ENCODE measurements at regions of chr18 and their contacts with region 1.

Region 1: DNA sequence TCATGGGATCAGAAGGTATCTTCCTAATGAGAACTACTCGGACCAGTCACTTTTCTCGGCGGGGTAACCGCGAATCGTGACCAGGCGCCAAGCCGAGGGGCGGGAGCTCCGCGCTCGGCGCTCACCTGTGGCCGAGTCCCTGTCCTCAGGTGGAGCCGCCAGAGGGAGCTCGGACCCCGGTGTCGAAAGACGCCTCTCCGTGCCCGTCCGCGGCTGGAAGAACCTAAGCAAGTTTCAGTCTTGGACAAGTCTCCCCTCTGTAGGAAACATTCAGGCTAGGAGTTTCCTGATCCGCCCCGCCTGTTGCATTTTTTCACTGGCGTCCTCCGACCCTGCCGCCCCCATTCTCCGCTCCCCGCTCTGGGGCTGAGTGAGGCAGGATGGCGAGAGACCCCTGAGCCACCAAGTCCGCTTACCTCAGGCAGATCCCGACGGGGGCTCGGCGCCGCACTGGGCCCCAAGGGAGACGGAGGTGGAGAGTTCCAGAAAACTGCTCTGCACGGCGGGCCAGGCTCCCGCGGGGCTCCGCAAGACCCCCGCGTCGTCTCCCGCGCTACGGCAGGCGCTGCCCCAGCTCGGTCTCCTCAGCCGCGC is 478 bp downstream of the DSEL start:
- DNase-seq: peak; percentile 15 to 76 (median 45)
- ATAC-seq: peak; percentile 5
- H3K4me3 ChIP-seq: peak overlapping the region; percentile 77
- H3K4me3 Mint-ChIP-seq: peak overlapping the region; percentile 89
- H3K27ac ChIP-seq: no peak overlapping the region
- H3K27ac Mint-ChIP-seq: peak overlapping the region; percentile 18
- H3K4me1 ChIP-seq: peaks cover 18% of the 10 kb centered on the region
- H3K4me1 Mint-ChIP-seq: peaks cover 37% of the 10 kb centered on the region
- H3K27me3 ChIP-seq: no peaks in the 10 kb centered on the region
- H3K27me3 Mint-ChIP-seq: no peaks in the 10 kb centered on the region
- CTCF ChIP-seq: peak; percentile 39

Region 2: DNA sequence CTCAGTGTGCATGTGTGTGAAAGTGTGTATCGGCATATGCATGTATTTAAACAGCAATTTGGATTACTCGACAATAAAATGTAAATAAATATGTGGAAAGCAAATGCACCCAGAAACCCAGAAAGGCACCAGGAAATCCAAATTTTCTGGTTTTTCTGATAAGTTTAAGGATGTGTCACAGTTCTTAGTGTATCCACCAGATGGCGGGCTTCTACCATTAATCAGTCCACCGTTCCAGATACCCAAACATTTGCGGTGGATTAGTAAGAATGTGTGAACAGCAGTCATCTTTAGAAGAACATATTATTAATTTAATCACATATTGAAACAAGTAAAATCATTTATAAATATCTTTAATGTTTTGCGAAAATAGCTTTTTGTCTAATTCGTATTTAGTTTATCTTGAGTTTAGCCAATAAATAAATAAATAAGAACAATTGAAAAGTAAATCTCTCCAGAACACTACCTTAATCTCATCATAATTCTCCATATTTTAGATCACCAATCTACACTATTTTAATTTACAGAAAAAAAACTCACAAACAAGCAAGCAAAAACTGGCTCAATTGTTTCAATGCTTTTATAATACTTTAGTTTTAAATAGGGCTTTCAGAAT is 298.4 kb before region 1 on chr18:
- CTCF ChIA-PET with region 1: no interaction called
- POLR2A ChIA-PET with region 1: no interaction called
- intact Hi-C with region 1: loop called in 1 of 2 experiments (anchors 5 kb)
- DNase-seq: peak in 13 of 14 experiments; percentile 16 to 76 (median 37)
- ATAC-seq: peak; percentile 86
- H3K4me3 ChIP-seq: no peak overlapping the region
- H3K4me3 Mint-ChIP-seq: no peak overlapping the region
- H3K27ac ChIP-seq: no peak overlapping the region
- H3K27ac Mint-ChIP-seq: no peak overlapping the region
- H3K4me1 ChIP-seq: no peaks in the 10 kb centered on the region
- H3K4me1 Mint-ChIP-seq: no peaks in the 10 kb centered on the region
- H3K27me3 ChIP-seq: no peaks in the 10 kb centered on the region
- H3K27me3 Mint-ChIP-seq: peaks cover 7% of the 10 kb centered on the region
- CTCF ChIP-seq: peak; percentile 87

Region 3: DNA sequence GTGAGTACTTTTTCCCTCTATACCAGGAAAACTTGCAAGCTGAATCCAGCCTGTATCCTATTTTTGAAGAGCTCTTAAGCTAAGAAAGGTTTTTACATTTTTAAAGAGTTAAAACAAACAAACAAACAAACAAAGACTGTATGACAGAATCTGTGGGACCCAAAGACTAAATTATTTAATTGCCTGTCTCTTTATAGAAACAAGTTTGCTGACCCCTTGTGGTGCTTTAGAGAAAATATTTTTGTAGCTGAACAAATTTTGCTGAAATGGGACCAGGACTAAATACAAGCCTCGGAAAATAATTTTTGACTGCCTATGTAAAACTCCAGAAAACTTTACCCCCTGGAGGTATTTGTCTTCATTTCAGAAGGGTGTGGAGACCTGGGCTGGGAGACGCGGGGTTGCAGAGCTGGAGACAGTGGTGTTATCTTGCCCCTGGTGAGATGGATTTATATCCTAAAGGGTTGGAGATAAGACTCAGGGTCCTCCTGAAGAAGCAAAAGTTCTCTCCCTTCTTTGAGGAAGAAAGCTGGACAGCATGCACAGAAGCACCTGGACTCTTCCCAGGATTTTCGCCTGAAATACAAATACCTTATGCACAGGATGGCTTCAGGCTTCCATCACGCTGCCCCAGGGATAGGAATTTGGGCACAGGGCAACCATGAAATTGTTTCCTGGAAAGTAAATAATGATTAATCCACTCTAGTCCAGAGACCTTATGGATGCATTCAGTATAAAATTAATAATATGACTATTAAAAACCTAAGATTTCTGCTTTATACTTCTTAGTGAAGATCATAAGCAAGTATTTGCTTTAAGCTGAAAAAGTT is 1144.5 kb after region 1 on chr18:
- CTCF ChIA-PET with region 1: no interaction called
- POLR2A ChIA-PET with region 1: no interaction called
- intact Hi-C with region 1: loop called in 1 of 2 experiments (anchors 5 kb)
- DNase-seq: peak in 3 of 14 experiments; percentile 35 to 52 (median 43)
- ATAC-seq: no peak
- H3K4me3 ChIP-seq: no peak overlapping the region
- H3K4me3 Mint-ChIP-seq: no peak overlapping the region
- H3K27ac ChIP-seq: no peak overlapping the region
- H3K27ac Mint-ChIP-seq: no peak overlapping the region
- H3K4me1 ChIP-seq: no peaks in the 10 kb centered on the region
- H3K4me1 Mint-ChIP-seq: no peaks in the 10 kb centered on the region
- H3K27me3 ChIP-seq: no peaks in the 10 kb centered on the region
- H3K27me3 Mint-ChIP-seq: peaks cover 5% of the 10 kb centered on the region
- CTCF ChIP-seq: peak; percentile 69

Region 4: DNA sequence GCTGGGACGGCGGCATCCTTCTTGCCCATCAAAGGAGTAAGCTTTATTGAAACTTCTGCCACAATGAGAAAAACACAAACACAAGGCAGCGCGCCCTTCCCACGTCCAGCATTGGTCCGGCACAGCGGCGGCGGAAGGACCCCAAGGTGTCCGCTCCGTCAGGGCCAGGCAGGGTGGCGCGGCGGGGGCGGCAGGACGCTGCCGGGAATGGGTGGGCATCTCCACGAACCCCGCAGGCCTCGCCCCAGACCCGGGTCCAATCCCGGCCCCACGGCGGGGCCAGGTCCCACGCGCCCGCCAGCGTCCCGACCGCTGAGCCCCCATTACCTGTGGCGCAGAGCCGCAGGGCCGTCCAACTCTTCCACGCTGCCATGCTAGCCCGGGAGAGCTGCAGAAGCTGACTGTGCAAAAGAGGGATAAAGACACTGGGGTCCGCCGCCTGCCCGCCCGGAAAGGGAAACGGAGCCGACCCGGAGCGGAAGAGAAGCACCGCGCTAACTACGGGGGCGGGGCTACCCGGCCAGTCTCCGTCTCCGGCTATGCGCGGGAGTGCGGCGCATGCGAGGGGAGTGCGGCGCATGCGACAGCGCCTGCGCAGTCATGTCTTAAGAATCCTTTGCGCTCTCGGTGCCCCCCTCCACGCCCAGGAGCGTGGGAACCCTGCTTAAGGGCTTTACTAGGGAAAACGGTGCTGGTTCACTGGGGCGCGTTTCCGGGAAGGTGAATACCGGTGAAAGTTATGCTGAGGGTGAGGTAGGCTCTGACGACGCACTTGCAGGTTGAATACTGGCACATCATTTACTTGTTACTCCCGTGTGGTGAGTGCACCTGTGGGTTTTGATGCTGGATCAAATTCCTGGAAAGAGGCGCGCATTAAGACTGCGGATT is 1198.8 kb after region 1 on chr18 and contains the start of gene TMX3:
- CTCF ChIA-PET with region 1: no interaction called
- POLR2A ChIA-PET with region 1: no interaction called
- intact Hi-C with region 1: loop called (anchors 5 to 10 kb)
- DNase-seq: peak; percentile 81 to 97 (median 90)
- ATAC-seq: peak; percentile 98
- H3K4me3 ChIP-seq: peak within 1 kb of the TSS; percentile 81
- H3K4me3 Mint-ChIP-seq: peak within 1 kb of the TSS; percentile 99
- H3K27ac ChIP-seq: peak within 1 kb of the TSS; percentile 16 to 36
- H3K27ac Mint-ChIP-seq: peak within 1 kb of the TSS; percentile 90
- H3K4me1 ChIP-seq: peaks cover 23% of the 10 kb centered on the region
- H3K4me1 Mint-ChIP-seq: peaks cover 55% of the 10 kb centered on the region
- H3K27me3 ChIP-seq: no peaks in the 10 kb centered on the region
- H3K27me3 Mint-ChIP-seq: no peaks in the 10 kb centered on the region
- CTCF ChIP-seq: no peak
- total RNA-seq, gene TMX3: 30.9 to 33.3 TPM

Region 5: GRCh38 chr18:68721681-68722583 is 1205.9 kb after region 1 on chr18:
- CTCF ChIA-PET with region 1: no interaction called
- POLR2A ChIA-PET with region 1: no interaction called
- intact Hi-C with region 1: loop called (anchors 5 to 10 kb)
- DNase-seq: peak in 3 of 14 experiments; percentile 48 to 65 (median 56)
- ATAC-seq: peak; percentile 70
- H3K4me3 ChIP-seq: peak overlapping the region; percentile 42
- H3K4me3 Mint-ChIP-seq: peak overlapping the region; percentile 90
- H3K27ac ChIP-seq: peak overlapping the region; percentile 42 to 43
- H3K27ac Mint-ChIP-seq: peak overlapping the region; percentile 88
- H3K4me1 ChIP-seq: no peaks in the 10 kb centered on the region
- H3K4me1 Mint-ChIP-seq: peaks cover 29% of the 10 kb centered on the region
- H3K27me3 ChIP-seq: no peaks in the 10 kb centered on the region
- H3K27me3 Mint-ChIP-seq: no peaks in the 10 kb centered on the region
- CTCF ChIP-seq: no peak